ENCODE measurements at regions of chr5 and their contacts with region 1.

Region 1: GRCh38 chr5:144203750-144204596 is 33.3 kb downstream of the KCTD16 start:
- DNase-seq: no peak

Region 2: DNA sequence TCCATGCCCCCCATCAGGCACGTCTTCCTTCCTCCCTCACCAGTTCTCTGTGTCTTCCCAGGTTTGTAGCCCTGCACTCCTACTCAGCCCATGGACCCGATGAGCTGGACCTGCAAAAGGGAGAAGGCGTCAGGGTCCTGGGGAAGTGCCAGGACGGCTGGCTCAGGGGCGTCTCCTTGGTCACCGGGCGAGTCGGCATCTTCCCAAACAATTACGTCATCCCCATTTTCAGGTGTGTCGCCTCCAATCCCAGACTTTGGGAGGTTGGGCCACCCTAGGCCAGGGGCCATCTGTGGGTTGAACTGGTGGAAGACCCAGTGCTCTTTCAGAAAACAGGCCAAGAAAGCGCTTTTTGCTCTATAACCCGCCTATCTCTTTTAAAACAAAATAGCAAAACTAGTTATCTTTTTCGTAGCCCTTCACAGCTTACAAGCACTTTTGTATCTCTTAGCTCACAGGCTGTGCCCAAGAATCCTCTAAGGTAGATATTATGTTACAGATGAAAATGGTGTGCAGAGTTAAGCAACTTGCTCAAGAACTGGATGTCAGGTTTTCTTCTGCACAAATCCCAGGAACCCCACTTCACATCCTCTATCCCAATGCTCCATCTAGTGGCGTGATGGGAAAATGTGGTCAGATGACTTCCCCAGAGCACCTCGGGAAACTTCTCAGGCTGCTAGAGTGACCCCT is 1845.2 kb after region 1 on chr5:
- intact Hi-C with region 1: loop called (anchors 10 kb)
- DNase-seq: no peak

Region 3: DNA sequence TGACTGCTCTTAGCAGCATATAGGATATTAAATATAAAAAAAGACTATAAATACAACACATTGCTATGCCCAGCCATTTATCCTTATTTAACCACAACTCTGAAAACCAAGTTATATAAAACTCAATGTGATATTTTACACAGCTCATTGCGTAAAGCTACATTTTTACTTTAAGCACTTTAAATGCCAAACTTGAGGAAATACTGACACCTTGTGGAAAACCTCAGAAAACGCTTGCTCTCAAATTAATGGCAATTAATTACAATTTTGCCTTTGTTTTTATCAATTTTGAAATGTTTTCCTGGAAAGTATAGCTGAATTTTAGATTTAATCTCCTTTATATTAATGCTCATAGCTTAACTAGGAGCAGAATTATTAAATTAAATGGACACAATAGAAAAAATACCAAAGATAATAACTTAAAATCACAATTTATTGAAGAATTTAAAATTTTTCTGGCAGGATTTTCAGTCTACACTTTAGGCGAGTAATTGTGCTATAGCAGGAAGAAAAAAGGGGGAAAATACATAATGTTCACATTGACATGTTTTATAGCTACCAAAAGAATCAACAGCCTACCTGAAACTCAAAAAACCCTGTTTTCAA is 1926.6 kb after region 1 on chr5:
- intact Hi-C with region 1: loop called (anchors 2 kb)
- DNase-seq: no peak